Gastrocnemius medialis (tissue), 4 donors: ENCODE measurements at regions of chr2 and their contacts with region 1.

Region 1: GRCh38 chr2:71510196-71510807 is 56.9 kb downstream of the DYSF start:
- DNase-seq: peak; percentile 57 to 71
- ATAC-seq: peak; percentile 68 to 85
- H3K4me3 ChIP-seq: no peak overlapping the region
- H3K27ac ChIP-seq: peak overlapping the region in 3 of 4 donors; percentile 3 to 33 (median 26)
- H3K4me1 ChIP-seq: peaks cover 8 to 12% of the 10 kb centered on the region in 2 donors
- H3K27me3 ChIP-seq: no peaks in the 10 kb centered on the region
- CTCF ChIP-seq: peak; percentile 87 to 97 (median 93)
- POLR2A ChIP-seq: no peak

Region 2: DNA sequence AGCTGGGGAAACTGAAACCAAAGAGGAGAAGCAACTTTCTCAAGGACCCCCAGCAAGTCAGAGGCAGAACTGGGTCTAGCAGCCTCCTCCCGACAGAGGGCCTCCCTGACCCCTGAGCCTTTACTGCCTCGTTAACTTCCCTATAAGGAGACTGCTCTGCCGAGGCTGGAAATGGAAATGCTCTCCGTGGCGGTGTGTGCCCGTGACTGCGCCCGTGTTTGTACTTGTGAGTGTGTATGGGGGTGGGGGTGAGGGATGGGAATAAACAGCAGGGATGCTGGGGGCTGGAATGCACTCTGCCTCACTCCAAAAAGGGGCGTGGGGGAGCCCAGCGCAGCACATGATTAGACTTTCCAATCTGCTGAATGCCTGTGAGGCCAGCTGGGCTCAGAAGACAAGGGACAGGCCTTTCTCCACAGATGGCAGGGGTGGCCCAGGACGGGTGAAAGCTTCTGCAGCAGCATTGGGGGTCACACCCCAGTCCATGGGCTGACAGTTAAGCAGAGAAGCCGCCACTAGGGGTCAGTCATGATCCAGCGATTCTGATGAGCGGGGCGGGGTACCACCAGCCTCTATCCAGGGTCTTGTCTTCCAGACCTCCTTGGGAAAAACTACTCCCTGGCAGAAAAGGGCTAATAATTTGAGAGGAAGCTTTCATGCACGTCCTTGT is 353.0 kb before region 1 on chr2:
- in situ Hi-C with region 1: no loop called
- intact Hi-C with region 1: loop called (anchors 10 kb)
- DNase-seq: peak in 1 of 2 donors; percentile 24
- ATAC-seq: peak; percentile 52 to 66
- H3K4me3 ChIP-seq: peak overlapping the region in 3 of 4 donors; percentile 20 to 37 (median 22)
- H3K27ac ChIP-seq: no peak overlapping the region
- H3K4me1 ChIP-seq: peaks cover 5% of the 10 kb centered on the region in 2 donors
- H3K27me3 ChIP-seq: no peaks in the 10 kb centered on the region
- CTCF ChIP-seq: peak; percentile 41 to 66 (median 62)
- POLR2A ChIP-seq: no peak

Region 3: GRCh38 chr2:71299507-71299906 is 210.8 kb before region 1 on chr2:
- in situ Hi-C with region 1: loop called (anchors 5 to 10 kb)
- intact Hi-C with region 1: loop called (anchors 1 kb)
- DNase-seq: no peak
- ATAC-seq: peak in 1 of 2 donors; percentile 46
- H3K4me3 ChIP-seq: no peak overlapping the region
- H3K27ac ChIP-seq: no peak overlapping the region
- H3K4me1 ChIP-seq: peaks cover 7 to 16% of the 10 kb centered on the region in 2 donors
- H3K27me3 ChIP-seq: no peaks in the 10 kb centered on the region
- CTCF ChIP-seq: peak; percentile 48 to 71 (median 51)
- POLR2A ChIP-seq: no peak

Region 4: DNA sequence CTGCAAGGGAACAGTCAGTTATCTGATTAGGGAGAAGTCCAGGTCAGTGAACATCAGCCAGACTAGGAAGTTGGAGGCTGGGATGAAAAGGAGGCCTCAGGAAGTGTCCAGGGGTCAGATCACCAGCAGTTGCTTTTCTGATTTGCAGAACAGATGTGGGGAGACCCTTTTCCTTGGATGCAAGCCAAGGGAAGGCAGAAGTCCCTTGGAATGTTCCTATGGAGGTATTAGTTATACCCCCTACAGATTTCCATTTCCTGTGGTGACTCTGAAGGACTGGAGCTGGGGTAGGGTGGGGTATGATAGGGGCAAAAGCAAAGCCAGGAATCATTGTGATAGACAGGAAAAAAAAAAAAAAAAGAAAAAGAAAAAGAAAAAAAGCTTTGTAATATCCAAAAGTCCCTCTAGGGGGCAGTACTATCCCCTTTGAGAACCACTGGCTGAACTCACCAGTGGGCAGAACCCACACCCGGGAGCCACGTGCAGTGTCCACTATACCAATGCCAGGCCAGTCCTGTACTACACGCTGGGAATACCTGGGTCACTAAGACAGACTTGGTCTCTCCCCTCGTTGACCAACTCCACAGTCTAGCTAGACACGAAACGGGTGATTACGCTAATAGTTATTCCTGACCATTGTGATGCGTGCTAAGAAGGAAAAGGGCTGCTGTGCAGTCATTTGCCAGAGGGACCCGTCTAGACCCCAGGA is 49.6 kb before region 1 on chr2:
- in situ Hi-C with region 1: loop called in 3 of 4 experiments (anchors 5 to 10 kb)
- intact Hi-C with region 1: loop called (anchors 1 kb)
- DNase-seq: peak in 1 of 2 donors; percentile 66
- ATAC-seq: peak; percentile 46 to 59
- H3K4me3 ChIP-seq: no peak overlapping the region
- H3K27ac ChIP-seq: peak overlapping the region; percentile 56 to 99 (median 93)
- H3K4me1 ChIP-seq: peaks cover 79 to 92% of the 10 kb centered on the region in 2 donors
- H3K27me3 ChIP-seq: no peaks in the 10 kb centered on the region
- CTCF ChIP-seq: peak; percentile 53 to 74 (median 58)
- POLR2A ChIP-seq: no peak

Region 5: GRCh38 chr2:72745679-72746368 is 1235.5 kb after region 1 on chr2:
- in situ Hi-C with region 1: loop called in 1 of 4 experiments (anchors 25 kb)
- intact Hi-C with region 1: no loop called
- DNase-seq: no peak
- ATAC-seq: peak; percentile 68 to 78
- H3K4me3 ChIP-seq: peak overlapping the region in 2 of 4 donors; percentile 1 to 19
- H3K27ac ChIP-seq: no peak overlapping the region
- H3K4me1 ChIP-seq: peaks cover 0 to 10% of the 10 kb centered on the region in 2 donors
- H3K27me3 ChIP-seq: no peaks in the 10 kb centered on the region
- CTCF ChIP-seq: peak; percentile 20 to 79 (median 69)
- POLR2A ChIP-seq: no peak